Activated CD8-positive, alpha-beta T cell treated with anti-CD3 and anti-CD28 coated beads for 36 hours (primary cell): ENCODE measurements at regions of chr1 and their contacts with region 1.

Region 1: DNA sequence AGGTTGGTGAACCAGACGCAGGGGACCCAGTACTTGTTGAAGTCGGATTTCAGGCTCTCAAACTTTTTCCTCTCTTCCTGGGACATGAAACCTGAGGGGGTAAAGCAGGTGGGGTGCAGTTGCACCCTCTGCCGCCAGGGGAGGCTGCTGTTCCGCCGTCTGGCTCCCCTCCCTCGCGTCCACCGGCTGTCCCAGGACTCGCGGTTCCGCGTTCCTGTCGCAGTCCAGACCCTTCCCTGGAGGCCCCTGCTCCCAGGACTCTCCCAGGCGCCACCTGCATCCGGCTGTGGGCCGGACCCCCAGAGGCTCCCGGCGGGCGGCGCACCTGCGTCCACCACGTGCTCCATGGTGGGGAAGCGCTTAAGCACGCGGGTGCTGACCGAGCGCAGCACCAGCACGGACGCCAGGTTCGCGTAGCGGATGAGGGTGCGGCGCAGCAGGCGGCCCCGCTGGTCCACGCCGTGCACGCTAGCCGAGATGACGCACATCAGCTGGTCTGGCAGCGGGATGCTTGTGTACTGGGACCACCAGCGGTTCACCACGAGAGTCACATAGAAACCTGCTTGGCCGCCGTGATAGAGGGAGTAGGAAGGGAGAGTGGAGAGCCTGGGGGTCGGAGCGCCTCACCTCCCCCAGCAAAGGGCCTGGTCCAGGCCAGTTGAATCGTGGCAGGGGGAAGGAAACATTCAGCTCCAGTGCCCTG is 1.7 kb downstream of the BEST4 start:
- DNase-seq: peak; percentile 78
- ATAC-seq: peak; percentile 69
- H3K4me3 Mint-ChIP-seq: peak overlapping the region; percentile 65
- H3K27ac Mint-ChIP-seq: peak overlapping the region; percentile 82
- H3K4me1 Mint-ChIP-seq: peaks cover 33% of the 10 kb centered on the region
- H3K27me3 Mint-ChIP-seq: no peaks in the 10 kb centered on the region
- CTCF ChIP-seq: peak; percentile 100

Region 2: GRCh38 chr1:44531785-44532566 is 254.3 kb before region 1 on chr1:
- CTCF ChIA-PET with region 1: no interaction called
- POLR2A ChIA-PET with region 1: no interaction called
- intact Hi-C with region 1: no loop called
- DNase-seq: no peak
- ATAC-seq: peak; percentile 74
- H3K4me3 Mint-ChIP-seq: no peak overlapping the region
- H3K27ac Mint-ChIP-seq: no peak overlapping the region
- H3K4me1 Mint-ChIP-seq: peaks cover 3% of the 10 kb centered on the region
- H3K27me3 Mint-ChIP-seq: peaks cover 1% of the 10 kb centered on the region
- CTCF ChIP-seq: no peak

Region 3: DNA sequence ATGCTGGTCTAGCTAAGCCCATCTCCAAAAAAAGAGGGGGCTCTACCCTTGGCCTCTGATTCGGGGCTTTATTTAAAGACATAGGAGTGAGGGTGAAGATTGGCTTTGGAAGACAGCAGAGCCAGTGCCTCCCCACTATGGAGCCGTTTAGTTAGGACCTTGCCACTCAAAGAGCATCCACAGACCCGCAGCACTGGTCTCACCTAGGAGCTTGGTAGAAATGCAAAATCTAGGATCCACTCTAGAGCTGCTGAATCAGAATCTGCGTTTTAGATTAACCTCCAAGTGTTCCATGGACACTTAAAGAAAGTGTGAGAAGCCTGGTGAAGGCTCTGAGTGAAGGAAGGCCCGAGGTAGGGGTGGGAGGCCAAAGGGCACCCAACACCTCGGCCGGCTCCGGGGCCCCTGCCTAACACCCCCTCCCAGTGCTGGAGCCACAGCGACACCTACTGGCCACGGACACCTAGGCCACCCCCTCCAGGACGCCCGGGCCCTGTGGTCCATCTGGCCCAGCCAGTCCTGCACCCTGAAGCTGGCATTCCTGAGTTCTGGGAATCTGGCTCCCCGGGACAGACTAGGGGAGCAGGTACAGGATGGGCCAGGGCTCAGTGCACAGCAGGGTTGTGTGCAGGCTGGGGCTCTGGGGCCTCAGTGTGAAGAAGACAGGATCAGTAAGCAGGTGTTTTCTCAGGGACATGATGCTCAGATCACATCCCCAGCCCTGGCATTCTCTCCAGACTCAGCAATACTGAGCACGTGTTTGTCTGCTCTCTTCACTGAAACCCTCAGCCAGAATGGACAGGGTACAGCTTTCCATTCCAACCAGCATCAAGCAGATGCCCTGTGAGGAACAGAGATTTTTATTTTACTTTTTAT is 191.2 kb before region 1 on chr1:
- CTCF ChIA-PET with region 1: no interaction called
- POLR2A ChIA-PET with region 1: no interaction called
- intact Hi-C with region 1: no loop called
- DNase-seq: peak; percentile 85
- ATAC-seq: peak; percentile 97
- H3K4me3 Mint-ChIP-seq: no peak overlapping the region
- H3K27ac Mint-ChIP-seq: no peak overlapping the region
- H3K4me1 Mint-ChIP-seq: no peaks in the 10 kb centered on the region
- H3K27me3 Mint-ChIP-seq: no peaks in the 10 kb centered on the region
- CTCF ChIP-seq: peak; percentile 98

Region 4: GRCh38 chr1:44799770-44800584 is 13.7 kb after region 1 on chr1 and contains the start of gene PLK3:
- CTCF ChIA-PET with region 1: interaction called, 21 read pairs
- POLR2A ChIA-PET with region 1: interaction called, 181 read pairs
- intact Hi-C with region 1: no loop called
- DNase-seq: peak; percentile 99
- ATAC-seq: peak; percentile 90
- H3K4me3 Mint-ChIP-seq: peak within 1 kb of the TSS; percentile 84
- H3K27ac Mint-ChIP-seq: peak within 1 kb of the TSS; percentile 100
- H3K4me1 Mint-ChIP-seq: peaks cover 35% of the 10 kb centered on the region
- H3K27me3 Mint-ChIP-seq: no peaks in the 10 kb centered on the region
- CTCF ChIP-seq: peak; percentile 76
- total RNA-seq, gene PLK3: 36.4 to 36.6 TPM

Region 5: GRCh38 chr1:44807262-44808062 is 21.2 kb after region 1 on chr1 and contains the start of gene DYNLT4:
- CTCF ChIA-PET with region 1: interaction called, 29 read pairs
- POLR2A ChIA-PET with region 1: interaction called, 99 read pairs
- intact Hi-C with region 1: no loop called
- DNase-seq: peak; percentile 97
- ATAC-seq: peak; percentile 59
- H3K4me3 Mint-ChIP-seq: peak within 1 kb of the TSS; percentile 55
- H3K27ac Mint-ChIP-seq: peak within 1 kb of the TSS; percentile 99
- H3K4me1 Mint-ChIP-seq: peaks cover 89% of the 10 kb centered on the region
- H3K27me3 Mint-ChIP-seq: no peaks in the 10 kb centered on the region
- CTCF ChIP-seq: no peak
- total RNA-seq, gene DYNLT4: 0.36 to 1.1 TPM

Region 6: DNA sequence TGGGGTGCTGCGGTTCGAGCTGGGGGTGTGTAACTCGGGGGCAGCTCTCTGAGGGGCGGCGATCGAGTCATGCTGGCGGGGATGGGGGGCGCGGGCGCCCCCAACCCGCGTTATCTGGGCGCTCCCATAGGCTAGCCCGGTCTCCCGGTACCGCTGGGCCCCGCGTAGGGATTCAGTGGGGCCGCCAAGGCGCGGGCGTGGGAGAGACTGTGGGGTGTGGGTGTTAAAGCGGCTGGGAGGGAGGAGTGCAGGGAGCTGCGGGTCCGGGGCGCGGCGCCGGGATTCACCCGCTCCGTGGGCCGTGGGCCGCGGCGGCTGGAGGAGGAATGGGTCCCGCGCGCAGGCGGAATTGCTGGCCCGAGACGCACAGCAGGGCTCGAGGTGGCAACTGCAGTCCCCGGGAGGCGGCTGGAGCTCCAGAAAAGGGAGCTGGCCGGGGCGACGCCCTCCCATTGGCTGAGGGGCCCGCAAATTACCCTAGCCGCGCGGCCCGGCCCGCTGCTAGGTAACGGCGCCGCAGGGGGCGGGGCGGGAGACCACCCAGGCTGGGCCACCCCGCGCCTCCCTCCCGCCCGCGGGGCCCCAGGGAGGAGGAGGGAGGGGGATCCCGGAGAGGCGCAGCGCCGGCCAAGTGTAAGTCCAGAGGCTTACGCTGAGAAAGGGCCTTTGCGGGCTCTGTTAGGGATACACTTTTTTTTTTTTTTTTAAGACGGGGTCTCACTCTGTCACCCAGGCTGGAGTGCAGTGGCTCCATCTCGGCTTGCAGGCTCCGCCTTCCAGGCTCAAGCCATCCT is 56.8 kb after region 1 on chr1 and contains the start of gene PTCH2:
- CTCF ChIA-PET with region 1: no interaction called
- POLR2A ChIA-PET with region 1: no interaction called
- intact Hi-C with region 1: no loop called
- DNase-seq: peak; percentile 48
- ATAC-seq: peak; percentile 83
- H3K4me3 Mint-ChIP-seq: peak within 1 kb of the TSS; percentile 43
- H3K27ac Mint-ChIP-seq: no peak within 1 kb of the TSS
- H3K4me1 Mint-ChIP-seq: peaks cover 4% of the 10 kb centered on the region
- H3K27me3 Mint-ChIP-seq: peaks cover 7% of the 10 kb centered on the region
- CTCF ChIP-seq: no peak
- total RNA-seq, gene PTCH2: 0.13 to 0.97 TPM

Region 7: GRCh38 chr1:44884746-44885145 is 98.5 kb after region 1 on chr1:
- CTCF ChIA-PET with region 1: no interaction called
- POLR2A ChIA-PET with region 1: no interaction called
- intact Hi-C with region 1: no loop called
- DNase-seq: no peak
- ATAC-seq: no peak
- H3K4me3 Mint-ChIP-seq: no peak overlapping the region
- H3K27ac Mint-ChIP-seq: no peak overlapping the region
- H3K4me1 Mint-ChIP-seq: no peaks in the 10 kb centered on the region
- H3K27me3 Mint-ChIP-seq: no peaks in the 10 kb centered on the region
- CTCF ChIP-seq: no peak